Ascending aorta (tissue), 2 donors: ENCODE measurements at regions of chr20 and their contacts with region 1.

Region 1: GRCh38 chr20:21505161-21505809 is 8.6 kb downstream of the NKX2-2 start:
- DNase-seq: no peak
- H3K4me3 ChIP-seq: peak overlapping the region in 1 of 2 donors; percentile 57
- H3K27ac ChIP-seq: no peak overlapping the region
- H3K4me1 ChIP-seq: peaks cover 7 to 12% of the 10 kb centered on the region in 2 donors
- H3K27me3 ChIP-seq: peaks cover 10% of the 10 kb centered on the region
- CTCF ChIP-seq: peak; percentile 70 to 87 (median 83)

Region 2: DNA sequence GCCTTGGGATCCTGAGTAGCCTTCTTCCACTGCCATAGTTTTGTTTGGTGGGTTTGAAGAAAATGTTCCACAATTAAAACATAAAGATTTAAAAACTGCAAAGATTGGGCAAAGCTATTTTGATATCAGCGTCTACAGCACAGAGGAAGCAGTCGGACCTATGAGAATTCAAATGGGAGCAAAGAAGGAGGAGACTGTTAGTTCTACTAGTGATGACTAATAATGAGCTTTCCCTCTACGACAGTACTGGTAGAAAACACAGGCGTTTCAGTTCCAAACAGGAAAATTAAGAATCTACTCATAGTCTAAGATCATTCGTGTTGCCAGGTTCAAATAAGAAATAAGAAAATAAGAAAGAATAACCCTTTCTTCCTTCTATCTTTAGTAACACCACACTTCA is 1016.2 kb before region 1 on chr20:
- intact Hi-C with region 1: no loop called
- DNase-seq: no peak
- H3K4me3 ChIP-seq: no peak overlapping the region
- H3K27ac ChIP-seq: no peak overlapping the region
- H3K4me1 ChIP-seq: no peaks in the 10 kb centered on the region
- H3K27me3 ChIP-seq: no peaks in the 10 kb centered on the region
- CTCF ChIP-seq: no peak

Region 3: GRCh38 chr20:20837574-20838021 is 667.7 kb before region 1 on chr20:
- intact Hi-C with region 1: loop called (anchors 5 kb)
- DNase-seq: peak in 1 of 2 donors; percentile 70
- H3K4me3 ChIP-seq: peak overlapping the region in 1 of 2 donors; percentile 40
- H3K27ac ChIP-seq: no peak overlapping the region
- H3K4me1 ChIP-seq: no peaks in the 10 kb centered on the region
- H3K27me3 ChIP-seq: no peaks in the 10 kb centered on the region
- CTCF ChIP-seq: peak in 2 of 3 experiments; percentile 41 to 61

Region 4: GRCh38 chr20:20860078-20860806 is 645.0 kb before region 1 on chr20:
- intact Hi-C with region 1: loop called (anchors 10 kb)
- DNase-seq: peak; percentile 35 to 89
- H3K4me3 ChIP-seq: no peak overlapping the region
- H3K27ac ChIP-seq: no peak overlapping the region
- H3K4me1 ChIP-seq: no peaks in the 10 kb centered on the region
- H3K27me3 ChIP-seq: no peaks in the 10 kb centered on the region
- CTCF ChIP-seq: peak; percentile 64 to 70 (median 66)

Region 5: GRCh38 chr20:21235484-21236445 is 269.5 kb before region 1 on chr20:
- intact Hi-C with region 1: loop called (anchors 1 kb)
- DNase-seq: peak in 1 of 2 donors; percentile 72
- H3K4me3 ChIP-seq: no peak overlapping the region
- H3K27ac ChIP-seq: no peak overlapping the region
- H3K4me1 ChIP-seq: peaks cover 0 to 3% of the 10 kb centered on the region in 2 donors
- H3K27me3 ChIP-seq: no peaks in the 10 kb centered on the region
- CTCF ChIP-seq: peak; percentile 37 to 63 (median 55)

Region 6: DNA sequence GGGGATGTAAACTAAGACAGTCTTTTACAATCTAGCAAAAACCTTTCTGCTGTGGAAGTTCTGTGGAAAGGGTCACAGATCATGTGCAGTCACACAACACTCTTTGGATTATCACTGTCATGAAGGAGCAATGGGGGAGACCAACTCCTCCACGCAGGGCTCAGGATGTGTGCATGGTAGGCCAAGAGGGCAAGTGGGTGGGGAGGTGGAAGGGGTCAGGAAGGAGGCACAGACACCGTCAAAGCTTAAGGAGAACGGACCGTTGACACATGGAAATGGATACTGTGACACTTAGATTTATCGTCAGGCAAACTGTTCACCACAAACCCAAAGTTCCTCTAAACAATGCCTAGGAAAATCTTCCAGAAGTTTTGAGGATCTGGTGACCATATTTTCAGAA is 416.0 kb after region 1 on chr20:
- intact Hi-C with region 1: no loop called
- DNase-seq: no peak
- H3K4me3 ChIP-seq: no peak overlapping the region
- H3K27ac ChIP-seq: no peak overlapping the region
- H3K4me1 ChIP-seq: no peaks in the 10 kb centered on the region
- H3K27me3 ChIP-seq: no peaks in the 10 kb centered on the region
- CTCF ChIP-seq: no peak